HepG2 (cell line): ENCODE measurements at regions of chr11 and their contacts with region 1.

Region 1: DNA sequence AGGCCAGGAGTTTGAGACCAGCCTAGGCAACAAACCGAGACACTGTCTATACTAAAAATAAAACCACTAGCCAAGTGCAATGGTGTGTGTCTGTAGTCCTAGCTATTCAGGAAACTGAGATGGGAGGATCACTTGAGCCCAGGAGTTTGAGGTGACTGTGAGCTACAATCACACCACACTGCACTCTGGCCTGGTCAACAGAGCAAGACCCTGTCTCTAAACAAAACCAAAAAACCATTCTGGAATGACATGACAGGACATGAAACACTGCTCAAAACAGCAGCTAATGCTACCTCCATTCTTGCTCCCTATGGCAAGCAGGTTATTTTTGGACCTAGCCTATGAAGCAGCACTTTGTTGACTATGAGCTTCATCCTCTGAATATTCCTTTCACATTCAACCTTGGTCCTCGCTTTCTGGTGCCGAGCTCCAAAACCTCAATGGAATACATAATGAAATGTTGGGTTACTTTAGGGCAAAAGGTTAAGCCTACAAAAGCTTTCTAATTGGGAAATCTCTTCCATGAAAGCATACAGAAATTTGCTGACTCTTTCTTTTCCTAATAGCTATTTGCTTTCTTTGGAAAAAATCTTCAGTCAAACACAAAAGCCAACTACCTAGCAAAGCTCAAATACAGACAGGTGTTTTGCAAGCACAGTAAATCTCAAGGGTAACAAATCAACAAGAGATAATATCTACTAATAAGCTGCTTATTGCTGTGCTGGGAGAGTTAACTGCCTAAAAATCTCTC is 21.1 kb downstream of the SIK3 start:
- DNase-seq: peak; percentile 96
- ATAC-seq: peak; percentile 91
- H3K4me3 ChIP-seq: peak overlapping the region in 1 of 3 experiments; percentile 5; a peak in 1 of 6 replicates
- H3K27ac ChIP-seq: peak overlapping the region; percentile 57
- H3K4me1 ChIP-seq: peaks cover 53% of the 10 kb centered on the region
- H3K27me3 ChIP-seq: no peaks in the 10 kb centered on the region
- CTCF ChIP-seq: no peak
- EP300 ChIP-seq: peak in 1 of 2 experiments; percentile 89; a peak in 2 of 4 replicates
- POLR2A ChIP-seq: no peak
- RAD21 ChIP-seq: no peak

Region 2: GRCh38 chr11:117020287-117020686 is 56.8 kb before region 1 on chr11:
- CTCF ChIA-PET with region 1: no interaction called
- POLR2A ChIA-PET with region 1: no interaction called
- in situ Hi-C with region 1: no loop called
- intact Hi-C with region 1: loop called (anchors 5 kb)
- DNase-seq: no peak
- ATAC-seq: no peak
- H3K4me3 ChIP-seq: peak overlapping the region in 1 of 3 experiments; percentile 43; a peak in 2 of 6 replicates
- H3K27ac ChIP-seq: peak overlapping the region; percentile 74
- H3K4me1 ChIP-seq: peaks cover 65% of the 10 kb centered on the region
- H3K27me3 ChIP-seq: no peaks in the 10 kb centered on the region
- CTCF ChIP-seq: no peak
- EP300 ChIP-seq: no peak
- POLR2A ChIP-seq: no peak
- RAD21 ChIP-seq: no peak